Activated B cell treated with CpG ODN at 0.5 μM for 24 hours (primary cell): ENCODE measurements at regions of chr13 and their contacts with region 1.

Region 1: GRCh38 chr13:23384111-23384510 is 49.4 kb downstream of the SACS start:
- DNase-seq: no peak
- ATAC-seq: peak; percentile 98
- H3K4me3 Mint-ChIP-seq: peak overlapping the region; percentile 36
- H3K27ac Mint-ChIP-seq: peak overlapping the region; percentile 87
- H3K4me1 Mint-ChIP-seq: peaks cover 35% of the 10 kb centered on the region
- H3K27me3 Mint-ChIP-seq: no peaks in the 10 kb centered on the region
- CTCF ChIP-seq: no peak

Region 2: GRCh38 chr13:23411706-23412105 is 27.6 kb after region 1 on chr13:
- CTCF ChIA-PET with region 1: no interaction called
- POLR2A ChIA-PET with region 1: no interaction called
- intact Hi-C with region 1: loop called (anchors 1 kb)
- DNase-seq: no peak
- ATAC-seq: no peak
- H3K4me3 Mint-ChIP-seq: no peak overlapping the region
- H3K27ac Mint-ChIP-seq: no peak overlapping the region
- H3K4me1 Mint-ChIP-seq: peaks cover 2% of the 10 kb centered on the region
- H3K27me3 Mint-ChIP-seq: peaks cover 9% of the 10 kb centered on the region
- CTCF ChIP-seq: no peak

Region 3: DNA sequence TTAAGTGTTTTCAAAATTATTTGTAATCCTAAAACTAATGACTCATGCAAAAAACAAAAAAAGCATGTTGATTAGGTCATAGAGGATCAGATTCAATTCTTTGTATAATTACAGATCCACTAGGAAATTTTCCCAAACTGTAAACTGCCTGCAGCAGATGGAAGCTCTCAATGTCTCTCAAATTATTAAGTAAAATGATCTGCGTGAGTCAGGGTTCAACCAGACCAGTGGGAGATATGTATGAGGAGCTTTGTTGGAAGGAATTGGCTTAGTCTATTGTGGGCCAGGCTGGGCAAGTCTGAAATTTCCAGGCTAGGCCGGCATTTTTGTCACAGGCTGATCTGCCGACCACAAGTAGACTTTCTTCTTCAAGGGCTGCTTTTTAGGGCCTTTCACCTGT is 63.8 kb after region 1 on chr13:
- CTCF ChIA-PET with region 1: no interaction called
- POLR2A ChIA-PET with region 1: no interaction called
- intact Hi-C with region 1: no loop called
- DNase-seq: no peak
- ATAC-seq: no peak
- H3K4me3 Mint-ChIP-seq: no peak overlapping the region
- H3K27ac Mint-ChIP-seq: no peak overlapping the region
- H3K4me1 Mint-ChIP-seq: no peaks in the 10 kb centered on the region
- H3K27me3 Mint-ChIP-seq: peaks cover 6% of the 10 kb centered on the region
- CTCF ChIP-seq: no peak